Endothelial cell of umbilical vein (primary cell): ENCODE measurements at regions of chr7 and their contacts with region 1.

Region 1: DNA sequence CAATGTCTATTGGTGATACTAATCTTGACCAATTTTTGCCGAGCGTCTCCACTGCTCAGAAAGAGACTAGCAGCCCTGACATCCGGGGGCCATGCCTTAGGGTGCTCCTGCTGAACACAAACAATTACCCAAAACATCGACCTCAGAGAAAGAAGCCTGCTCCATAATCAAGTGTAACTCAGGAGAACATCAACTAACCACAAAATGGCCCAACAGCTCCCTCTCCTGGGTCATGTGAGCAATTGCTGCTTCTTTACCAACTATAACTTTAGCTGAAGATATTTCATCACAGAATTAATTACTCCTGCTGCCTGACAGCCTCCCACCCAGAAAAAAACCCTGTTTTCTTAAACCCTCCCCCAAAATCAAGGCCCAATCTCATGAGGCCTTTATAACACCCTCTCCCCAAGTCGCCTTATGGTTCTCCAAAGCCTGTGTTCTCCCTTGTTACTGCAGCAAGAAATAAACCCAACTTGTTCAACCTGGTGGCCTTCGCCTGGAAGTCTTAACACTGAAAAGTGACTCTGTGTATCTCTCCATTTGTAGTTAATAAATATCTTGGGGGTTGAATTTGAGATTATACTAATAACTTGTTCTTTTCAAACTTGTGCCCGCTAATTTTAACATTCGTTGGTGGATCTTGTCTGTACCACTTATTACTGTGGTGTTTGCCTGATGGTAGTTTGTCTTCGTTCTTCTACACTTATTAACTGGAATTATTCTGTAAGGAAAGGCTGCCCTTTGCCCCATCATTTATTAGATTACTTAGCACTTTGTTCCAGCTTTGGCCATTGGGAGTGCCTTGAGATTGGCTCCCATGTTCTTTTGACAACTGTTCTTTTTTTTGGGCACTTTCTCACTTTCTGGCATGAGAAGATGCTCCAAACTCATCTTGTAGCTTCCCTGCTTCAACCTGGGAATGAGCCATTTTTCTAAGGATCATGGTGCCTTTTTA is 21.2 kb upstream of the RAMP3 start:
- DNase-seq: peak; percentile 73
- H3K4me3 ChIP-seq: no peak overlapping the region
- H3K27ac ChIP-seq: no peak overlapping the region
- H3K4me1 ChIP-seq: no peaks in the 10 kb centered on the region
- H3K27me3 ChIP-seq: peaks cover 4 to 5% of the 10 kb centered on the region in 2 experiments
- CTCF ChIP-seq: peak; percentile 79 to 83
- POLR2A ChIP-seq: no peak

Region 2: GRCh38 chr7:44587843-44588711 is 548.3 kb before region 1 on chr7:
- CTCF ChIA-PET with region 1: interaction called, 3 read pairs
- POLR2A ChIA-PET with region 1: no interaction called
- dilution Hi-C with region 1: no loop called
- intact Hi-C with region 1: loop called (anchors 1 kb)
- DNase-seq: peak; percentile 81
- H3K4me3 ChIP-seq: no peak overlapping the region
- H3K27ac ChIP-seq: no peak overlapping the region
- H3K4me1 ChIP-seq: no peaks in the 10 kb centered on the region
- H3K27me3 ChIP-seq: no peaks in the 10 kb centered on the region
- CTCF ChIP-seq: peak; percentile 27 to 48
- POLR2A ChIP-seq: no peak

Region 3: GRCh38 chr7:44867073-44867995 is 269.0 kb before region 1 on chr7:
- CTCF ChIA-PET with region 1: interaction called, 13 read pairs
- POLR2A ChIA-PET with region 1: no interaction called
- dilution Hi-C with region 1: no loop called
- intact Hi-C with region 1: no loop called
- DNase-seq: peak; percentile 60
- H3K4me3 ChIP-seq: no peak overlapping the region
- H3K27ac ChIP-seq: no peak overlapping the region
- H3K4me1 ChIP-seq: no peaks in the 10 kb centered on the region
- H3K27me3 ChIP-seq: no peaks in the 10 kb centered on the region
- CTCF ChIP-seq: no peak
- POLR2A ChIP-seq: no peak

Region 4: DNA sequence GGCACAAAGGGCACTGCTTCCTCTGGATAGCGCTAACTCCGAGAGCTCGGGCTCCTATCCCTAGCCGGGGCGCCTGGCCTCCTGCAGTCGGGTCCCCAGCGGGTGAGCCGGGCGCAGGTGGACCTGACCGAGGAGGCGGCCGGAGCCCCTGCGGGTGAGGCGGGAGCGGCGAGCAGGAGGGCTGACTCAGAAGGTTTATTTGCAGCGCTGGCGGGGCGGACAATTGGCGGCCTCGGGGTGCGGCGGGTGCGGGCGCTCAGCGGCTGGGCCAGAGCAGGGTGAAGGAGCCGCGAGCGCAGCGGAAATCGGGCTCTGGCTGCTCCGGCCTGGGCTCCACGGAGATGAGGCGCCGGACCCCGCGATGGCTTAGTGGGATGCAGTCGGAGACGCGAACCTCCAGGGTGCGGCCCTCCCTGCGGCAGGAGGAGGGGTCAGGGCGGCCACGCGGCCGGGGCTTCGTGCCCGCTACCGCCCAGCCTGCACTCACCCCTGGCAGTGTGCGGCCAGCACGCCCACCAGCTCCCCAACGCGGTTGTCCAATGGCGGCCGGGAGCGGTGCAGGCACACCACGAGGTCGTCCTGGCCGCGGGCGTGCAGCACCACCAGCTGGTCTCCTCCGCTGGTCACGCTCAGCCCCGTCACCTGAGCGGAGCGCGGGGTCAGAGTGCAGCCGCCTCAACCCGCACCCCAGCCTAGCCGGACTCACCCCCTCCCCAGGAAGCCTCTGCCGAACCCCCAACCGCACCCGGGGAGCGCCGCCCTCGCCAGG is 173.7 kb before region 1 on chr7:
- CTCF ChIA-PET with region 1: interaction called, 55 read pairs
- POLR2A ChIA-PET with region 1: no interaction called
- dilution Hi-C with region 1: no loop called
- intact Hi-C with region 1: loop called (anchors 1 kb)
- DNase-seq: peak; percentile 27
- H3K4me3 ChIP-seq: peak overlapping the region in 2 of 3 experiments; percentile 27 to 31
- H3K27ac ChIP-seq: no peak overlapping the region
- H3K4me1 ChIP-seq: peaks cover 3% of the 10 kb centered on the region
- H3K27me3 ChIP-seq: peaks cover 2 to 4% of the 10 kb centered on the region in 2 experiments
- CTCF ChIP-seq: no peak
- POLR2A ChIP-seq: no peak

Region 5: GRCh38 chr7:44999245-45000095 is 136.9 kb before region 1 on chr7:
- CTCF ChIA-PET with region 1: interaction called, 14 read pairs
- POLR2A ChIA-PET with region 1: no interaction called
- dilution Hi-C with region 1: no loop called
- intact Hi-C with region 1: no loop called
- DNase-seq: peak; percentile 100
- H3K4me3 ChIP-seq: peak overlapping the region; percentile 57 to 97 (median 96)
- H3K27ac ChIP-seq: peak overlapping the region; percentile 79
- H3K4me1 ChIP-seq: peaks cover 31% of the 10 kb centered on the region
- H3K27me3 ChIP-seq: no peaks in the 10 kb centered on the region
- CTCF ChIP-seq: no peak
- POLR2A ChIP-seq: peak; percentile 66

Region 6: GRCh38 chr7:45111298-45112223 is 24.8 kb before region 1 on chr7 and contains the start of gene TBRG4:
- CTCF ChIA-PET with region 1: interaction called, 13 read pairs
- POLR2A ChIA-PET with region 1: no interaction called
- dilution Hi-C with region 1: no loop called
- intact Hi-C with region 1: loop called (anchors 1 kb)
- DNase-seq: peak; percentile 93
- H3K4me3 ChIP-seq: peak within 1 kb of the TSS; percentile 33 to 88 (median 64)
- H3K27ac ChIP-seq: peak within 1 kb of the TSS; percentile 57
- H3K4me1 ChIP-seq: peaks cover 8% of the 10 kb centered on the region
- H3K27me3 ChIP-seq: peaks cover 11 to 26% of the 10 kb centered on the region in 2 experiments
- CTCF ChIP-seq: peak in 1 of 2 donors; percentile 42
- POLR2A ChIP-seq: peak; percentile 82
- total RNA-seq, gene TBRG4: 56.7 and 63.4 TPM in 2 replicates